ENCODE measurements at regions of chr3 and their contacts with region 1.

Region 1: GRCh38 chr3:183502237-183503181 is 53.0 kb downstream of the KLHL6 start:
- DNase-seq: no peak
- H3K4me3 ChIP-seq: no peak overlapping the region
- H3K27me3 ChIP-seq: peaks cover 2% of the 10 kb centered on the region
- CTCF ChIP-seq: no peak

Region 2: DNA sequence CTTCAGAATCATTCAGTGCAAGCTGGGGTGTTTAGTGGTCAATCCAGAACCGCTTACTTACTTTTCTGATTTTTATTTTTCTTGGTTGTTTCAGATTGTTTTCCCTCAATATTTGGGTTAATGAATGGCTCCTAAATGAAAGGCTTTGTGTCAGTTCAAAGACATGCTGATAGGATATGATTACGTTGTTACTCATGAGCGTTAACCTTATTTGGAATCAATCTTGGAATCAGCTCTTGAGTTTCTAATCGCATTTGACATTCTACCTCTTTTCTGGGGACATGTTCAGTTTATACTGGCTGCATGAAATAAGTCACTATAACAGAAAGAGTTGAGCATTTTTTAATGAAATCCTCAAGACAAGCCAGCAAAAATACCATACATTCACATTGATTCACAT is 659.0 kb before region 1 on chr3:
- CTCF ChIA-PET with region 1: no interaction called
- POLR2A ChIA-PET with region 1: no interaction called
- DNase-seq: no peak
- H3K4me3 ChIP-seq: no peak overlapping the region
- H3K27me3 ChIP-seq: no peaks in the 10 kb centered on the region
- CTCF ChIP-seq: no peak

Region 3: GRCh38 chr3:183560607-183561006 is 58.1 kb after region 1 on chr3:
- CTCF ChIA-PET with region 1: interaction called, 11 read pairs
- POLR2A ChIA-PET with region 1: no interaction called
- DNase-seq: no peak
- H3K4me3 ChIP-seq: no peak overlapping the region
- H3K27me3 ChIP-seq: no peaks in the 10 kb centered on the region
- CTCF ChIP-seq: 0 out of 2 replicates have a peak, but pooled peaks have one; percentile 3

Region 4: DNA sequence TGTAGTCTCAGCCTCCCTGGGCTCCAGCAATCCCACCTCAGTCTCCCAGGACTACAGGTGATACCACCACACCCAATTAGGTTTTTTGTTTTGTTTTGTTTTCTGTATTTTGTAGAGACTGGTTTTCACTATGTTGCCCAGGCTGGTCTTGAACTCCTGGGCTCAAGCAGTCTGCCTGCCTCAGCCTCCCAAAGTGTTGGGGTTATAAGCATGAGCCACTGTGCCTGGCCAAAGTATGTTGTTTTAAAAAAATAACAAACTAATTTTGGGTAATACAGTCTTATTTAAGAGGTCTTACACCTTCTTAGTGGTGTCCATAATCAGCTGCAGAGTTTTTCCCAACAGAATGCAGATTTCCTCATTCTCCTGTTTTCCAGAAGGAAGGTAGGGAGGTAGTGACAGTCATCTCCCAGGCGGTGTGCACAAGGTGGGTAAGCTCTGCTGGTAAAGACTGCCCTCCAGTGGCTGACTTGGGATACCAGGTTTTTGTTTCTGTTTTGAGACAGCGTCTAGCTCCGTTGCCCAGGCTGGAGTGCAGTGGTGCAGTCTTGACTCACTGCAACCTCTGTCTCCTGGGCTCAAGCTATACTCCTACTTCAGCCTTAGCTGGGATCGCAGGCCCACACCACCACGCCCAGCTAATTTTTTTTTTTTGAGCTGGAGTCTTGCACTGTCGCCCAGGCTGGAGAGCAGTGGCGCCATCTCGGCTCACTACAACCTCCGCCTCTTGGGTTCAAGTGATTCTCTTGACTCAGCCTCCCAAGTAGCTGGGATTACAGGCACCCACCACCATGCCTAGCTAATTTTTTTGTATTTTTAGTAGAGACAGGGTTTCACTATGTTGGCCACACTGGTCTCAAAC is 264.5 kb after region 1 on chr3:
- CTCF ChIA-PET with region 1: interaction called, 16 read pairs
- POLR2A ChIA-PET with region 1: no interaction called
- DNase-seq: no peak
- H3K4me3 ChIP-seq: no peak overlapping the region
- H3K27me3 ChIP-seq: no peaks in the 10 kb centered on the region
- CTCF ChIP-seq: peak; percentile 79